ENCODE measurements at regions of chr5 and their contacts with region 1.

Region 1: DNA sequence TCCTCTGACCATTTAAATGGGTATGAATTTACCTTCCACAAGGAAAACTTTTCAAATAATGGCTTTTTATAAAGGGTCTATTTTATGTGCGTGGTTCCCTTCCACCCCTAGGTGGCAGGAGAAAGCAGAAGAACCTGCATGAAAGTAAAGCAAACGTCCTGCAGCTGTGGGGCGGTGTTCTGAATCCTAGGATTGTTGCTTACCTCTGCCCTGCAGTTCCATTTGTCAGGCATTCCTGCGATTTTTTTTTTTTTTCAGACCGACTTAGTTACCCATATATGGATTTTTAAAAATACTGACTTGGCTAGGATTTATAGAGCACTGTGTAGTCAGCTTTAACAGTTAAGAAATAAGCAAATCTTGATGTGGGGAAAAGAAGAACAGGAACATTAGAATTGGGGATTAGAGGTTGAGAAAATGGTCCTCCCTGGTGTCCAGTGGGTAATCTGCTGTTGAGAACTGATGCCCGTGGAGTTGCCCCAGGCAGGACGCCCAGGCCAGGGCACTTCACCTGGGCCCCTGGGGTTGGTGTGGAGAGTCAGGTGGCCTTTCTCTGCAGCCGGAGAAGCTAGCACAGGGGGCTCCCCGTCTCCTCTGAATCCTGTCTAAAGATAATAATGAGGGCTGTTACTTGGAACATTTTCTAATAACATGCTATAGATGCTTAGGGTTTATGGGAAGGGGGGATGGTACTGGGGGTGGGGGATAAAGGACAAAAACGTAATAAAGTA is 30.4 kb upstream of the LTC4S start:
- DNase-seq: peak; percentile 75
- H3K4me3 ChIP-seq: no peak overlapping the region
- H3K27ac ChIP-seq: no peak overlapping the region
- H3K4me1 ChIP-seq: peaks cover 47% of the 10 kb centered on the region
- H3K27me3 ChIP-seq: no peaks in the 10 kb centered on the region
- CTCF ChIP-seq: peak; percentile 85 to 94

Region 2: GRCh38 chr5:179732417-179732917 is 30.9 kb before region 1 on chr5 and contains the start of gene MAML1:
- CTCF ChIA-PET with region 1: interaction called, 3 read pairs
- dilution Hi-C with region 1: no loop called
- in situ Hi-C with region 1: no loop called
- intact Hi-C with region 1: loop called (anchors 2 kb)
- DNase-seq: peak; percentile 100
- H3K4me3 ChIP-seq: peak within 1 kb of the TSS; percentile 58 to 82 (median 60)
- H3K27ac ChIP-seq: peak within 1 kb of the TSS; percentile 67
- H3K4me1 ChIP-seq: peaks cover 8% of the 10 kb centered on the region
- H3K27me3 ChIP-seq: no peaks in the 10 kb centered on the region
- CTCF ChIP-seq: no peak
- total RNA-seq, gene MAML1: 10.5 to 17.7 TPM

Region 3: GRCh38 chr5:179821581-179822432 is 58.4 kb after region 1 on chr5:
- CTCF ChIA-PET with region 1: no interaction called
- dilution Hi-C with region 1: loop called (anchors 5 kb)
- in situ Hi-C with region 1: no loop called
- intact Hi-C with region 1: loop called (anchors 1 kb)
- DNase-seq: peak; percentile 89
- H3K4me3 ChIP-seq: peak overlapping the region; percentile 64 to 91 (median 77)
- H3K27ac ChIP-seq: peak overlapping the region; percentile 63
- H3K4me1 ChIP-seq: peaks cover 36% of the 10 kb centered on the region
- H3K27me3 ChIP-seq: no peaks in the 10 kb centered on the region
- CTCF ChIP-seq: no peak

Region 4: DNA sequence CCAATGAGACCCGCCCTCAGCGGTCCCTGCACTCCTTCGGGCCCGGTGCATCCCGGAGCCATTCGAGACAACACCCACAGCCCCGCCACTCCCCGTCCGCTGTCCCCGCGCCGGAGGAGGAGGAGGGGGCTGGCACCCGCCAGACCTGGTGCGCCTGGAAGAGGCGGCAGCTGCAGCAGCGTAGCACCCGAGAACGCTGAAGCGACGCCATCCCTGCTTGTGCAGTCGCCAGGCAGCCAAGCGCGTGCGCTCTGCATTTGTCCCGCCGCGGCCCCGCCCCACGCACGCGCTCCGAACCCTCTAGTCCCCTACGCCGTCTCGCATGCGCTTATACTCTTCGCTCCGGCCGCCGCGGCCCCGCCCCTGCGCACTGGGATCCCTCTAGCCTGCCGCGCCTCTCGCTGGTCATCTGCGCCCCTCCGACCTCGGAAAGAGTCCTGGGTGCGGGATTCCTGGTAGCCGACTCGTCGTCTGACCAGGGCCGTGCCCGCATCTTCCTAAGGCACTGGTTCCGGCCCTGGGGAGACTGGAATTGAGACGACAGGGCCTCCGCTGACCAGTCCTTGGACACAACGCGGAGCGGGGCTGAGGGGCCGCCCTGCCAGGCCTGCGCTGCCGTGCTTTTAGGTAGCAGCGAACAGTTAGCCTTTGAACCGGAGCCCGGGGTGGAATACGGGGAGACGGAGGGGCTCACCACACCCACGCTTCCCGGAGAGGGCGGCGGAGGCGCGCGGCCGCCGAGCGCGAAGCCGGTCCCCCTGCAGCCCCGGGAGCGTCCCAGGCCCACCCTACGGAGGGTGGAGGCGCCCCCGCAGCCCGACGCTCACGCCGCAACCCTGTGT is 95.4 kb after region 1 on chr5 and contains the start of gene MRNIP:
- CTCF ChIA-PET with region 1: no interaction called
- dilution Hi-C with region 1: no loop called
- in situ Hi-C with region 1: no loop called
- intact Hi-C with region 1: loop called (anchors 1 kb)
- DNase-seq: peak; percentile 92
- H3K4me3 ChIP-seq: peak within 1 kb of the TSS; percentile 91 to 97 (median 92)
- H3K27ac ChIP-seq: peak within 1 kb of the TSS; percentile 63
- H3K4me1 ChIP-seq: peaks cover 5% of the 10 kb centered on the region
- H3K27me3 ChIP-seq: no peaks in the 10 kb centered on the region
- CTCF ChIP-seq: peak in 1 of 2 donors; percentile 25
- total RNA-seq, gene MRNIP: 9.5 to 20.4 TPM

Region 5: GRCh38 chr5:179878222-179879009 is 115.0 kb after region 1 on chr5:
- CTCF ChIA-PET with region 1: no interaction called
- dilution Hi-C with region 1: no loop called
- in situ Hi-C with region 1: no loop called
- intact Hi-C with region 1: no loop called
- DNase-seq: no peak
- H3K4me3 ChIP-seq: no peak overlapping the region
- H3K27ac ChIP-seq: no peak overlapping the region
- H3K4me1 ChIP-seq: no peaks in the 10 kb centered on the region
- H3K27me3 ChIP-seq: no peaks in the 10 kb centered on the region
- CTCF ChIP-seq: no peak

Region 6: DNA sequence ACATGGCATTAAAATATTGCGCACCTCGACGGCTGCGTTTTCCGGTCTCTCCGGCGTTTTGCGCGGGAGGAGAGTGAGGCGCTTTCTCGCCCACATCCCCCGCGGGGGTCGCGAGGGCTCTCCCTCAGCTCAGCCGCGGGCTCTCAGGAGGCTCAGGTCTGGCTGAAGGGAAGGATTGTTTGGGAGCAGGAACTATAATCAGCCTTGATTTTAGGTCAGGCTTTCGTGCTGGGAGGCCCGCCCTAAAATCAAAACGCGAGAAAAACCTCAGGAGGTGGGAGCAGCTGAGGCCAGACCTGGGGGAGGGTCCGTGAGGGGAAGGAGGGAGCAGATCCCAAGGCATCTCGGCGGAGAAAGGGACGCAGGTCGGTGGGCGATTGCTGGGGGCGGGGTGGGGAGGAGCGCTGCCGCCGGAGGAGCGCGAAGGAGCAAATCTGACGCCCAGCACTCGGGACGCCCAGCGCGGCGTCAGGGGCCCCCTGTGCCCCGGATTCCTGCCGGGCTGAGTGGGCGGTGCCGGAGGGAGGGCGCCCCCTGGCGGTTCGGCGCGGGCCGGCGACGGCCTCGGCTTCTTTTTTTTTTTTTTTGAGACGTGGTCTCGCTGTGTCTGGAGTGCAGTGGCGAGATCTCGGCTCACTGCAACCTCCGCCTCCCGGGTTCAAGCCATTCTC is 326.9 kb after region 1 on chr5:
- CTCF ChIA-PET with region 1: no interaction called
- dilution Hi-C with region 1: no loop called
- in situ Hi-C with region 1: no loop called
- intact Hi-C with region 1: loop called (anchors 2 kb)
- DNase-seq: peak; percentile 30
- H3K4me3 ChIP-seq: peak overlapping the region; percentile 6 to 49 (median 38)
- H3K27ac ChIP-seq: no peak overlapping the region
- H3K4me1 ChIP-seq: no peaks in the 10 kb centered on the region
- H3K27me3 ChIP-seq: peaks cover 2% of the 10 kb centered on the region
- CTCF ChIP-seq: peak; percentile 31 to 76

Measured in mammary epithelial cell (primary cell).